Lower lobe of right lung (tissue), 2 donors: ENCODE measurements at regions of chr1 and their contacts with region 1.

Region 1: GRCh38 chr1:246012341-246012740 is 494.7 kb downstream of the SMYD3 start:
- DNase-seq: no peak
- ATAC-seq: no peak
- H3K4me3 ChIP-seq: no peak overlapping the region
- H3K27ac ChIP-seq: no peak overlapping the region
- H3K4me1 ChIP-seq: no peaks in the 10 kb centered on the region
- H3K27me3 ChIP-seq: no peaks in the 10 kb centered on the region
- CTCF ChIP-seq: peak; percentile 62

Region 2: DNA sequence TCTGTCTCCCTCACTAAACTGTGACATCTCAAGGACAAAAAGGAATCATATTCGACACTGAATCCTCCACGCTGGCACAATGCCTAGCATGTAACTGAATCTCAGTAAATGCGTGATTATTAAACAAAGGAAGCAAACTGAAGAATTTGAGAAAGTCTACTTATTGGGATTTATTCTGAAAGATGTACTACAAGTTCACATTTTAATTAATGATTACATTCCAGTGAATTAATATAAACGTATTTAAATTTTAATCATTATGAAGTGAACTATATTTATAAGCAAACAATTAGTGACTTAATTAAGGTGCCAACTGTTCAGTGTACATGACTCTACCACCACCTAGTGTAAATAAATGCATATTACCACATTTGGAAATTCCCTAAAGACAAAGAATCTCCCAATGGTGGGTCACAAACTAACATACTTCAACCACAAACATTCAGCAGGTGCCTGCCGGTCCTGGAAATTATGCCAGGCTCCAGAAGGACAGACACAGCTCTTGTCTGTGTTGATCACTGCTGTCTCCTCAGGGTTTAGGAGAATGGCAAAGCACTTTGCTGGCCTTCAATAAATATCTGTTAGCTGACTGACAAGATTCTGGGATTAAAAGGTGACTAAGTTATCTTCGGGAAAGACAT is 438.4 kb after region 1 on chr1:
- intact Hi-C with region 1: loop called (anchors 10 kb)
- DNase-seq: no peak
- ATAC-seq: peak in 1 of 2 donors; percentile 26
- H3K4me3 ChIP-seq: no peak overlapping the region
- H3K27ac ChIP-seq: no peak overlapping the region
- H3K4me1 ChIP-seq: peaks cover 2% of the 10 kb centered on the region
- H3K27me3 ChIP-seq: no peaks in the 10 kb centered on the region
- CTCF ChIP-seq: peak; percentile 61